B cell (primary cell): ENCODE measurements at regions of chr1 and their contacts with region 1.

Region 1: GRCh38 chr1:93846211-93846991 is 32.6 kb downstream of the DNTTIP2 start:
- DNase-seq: peak; percentile 94
- ATAC-seq: peak; percentile 57
- H3K4me3 ChIP-seq: peak overlapping the region; percentile 45 to 90 (median 86)
- H3K4me3 Mint-ChIP-seq: peak overlapping the region; percentile 95
- H3K27ac ChIP-seq: peak overlapping the region; percentile 91 to 92
- H3K27ac Mint-ChIP-seq: peak overlapping the region; percentile 100
- H3K4me1 ChIP-seq: peaks cover 5 to 30% of the 10 kb centered on the region in 2 donors
- H3K4me1 Mint-ChIP-seq: peaks cover 24% of the 10 kb centered on the region
- H3K27me3 ChIP-seq: no peaks in the 10 kb centered on the region
- H3K27me3 Mint-ChIP-seq: peaks cover 4% of the 10 kb centered on the region
- CTCF ChIP-seq: no peak

Region 2: DNA sequence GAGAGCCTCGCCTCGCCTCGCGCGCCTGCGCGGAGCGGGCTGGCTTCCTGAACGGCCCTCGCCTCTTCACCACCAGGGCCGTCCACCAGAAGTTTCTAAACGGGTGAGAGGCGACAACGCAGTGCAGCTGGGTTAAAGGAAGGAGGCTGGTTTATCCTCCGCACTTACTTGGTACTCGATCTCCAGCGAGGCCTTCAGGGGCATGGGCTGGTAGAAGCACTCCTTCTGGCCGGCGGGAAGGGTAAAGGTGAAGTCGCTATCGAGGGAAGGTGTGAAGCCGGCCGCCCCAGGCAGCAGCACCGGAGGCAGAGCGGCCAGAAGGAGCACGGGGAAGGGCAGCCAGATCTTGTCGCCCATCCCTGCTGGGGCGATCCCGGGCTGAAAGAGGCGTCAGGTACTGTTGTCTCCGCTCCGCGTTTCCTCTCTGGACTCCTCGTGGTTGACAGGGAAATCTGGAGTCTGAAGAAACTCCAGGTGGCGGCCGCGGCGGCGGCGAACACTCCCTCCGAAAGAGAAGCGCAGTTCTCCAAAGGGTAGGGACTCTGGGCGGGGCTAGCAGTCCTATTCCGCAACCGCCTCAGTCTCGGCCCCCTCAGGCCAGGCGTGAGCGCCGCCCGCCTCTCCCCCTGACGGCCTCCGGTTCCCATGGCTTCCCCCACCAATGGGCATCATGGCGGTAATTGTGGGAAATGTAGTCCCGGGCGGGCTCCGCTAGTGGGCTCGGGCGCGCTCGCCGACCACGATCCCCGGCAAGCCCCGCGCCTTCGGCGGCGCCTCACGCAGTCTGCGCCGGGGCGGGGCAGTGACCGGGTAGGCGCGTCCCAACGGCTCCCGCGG is 666.3 kb before region 1 on chr1 and contains the start of gene TMED5:
- CTCF ChIA-PET with region 1: no interaction called
- POLR2A ChIA-PET with region 1: no interaction called
- intact Hi-C with region 1: loop called (anchors 2 kb)
- DNase-seq: peak; percentile 97
- ATAC-seq: peak; percentile 85
- H3K4me3 ChIP-seq: peak within 1 kb of the TSS; percentile 81 to 98 (median 97)
- H3K4me3 Mint-ChIP-seq: peak within 1 kb of the TSS; percentile 90
- H3K27ac ChIP-seq: peak within 1 kb of the TSS; percentile 95 to 96
- H3K27ac Mint-ChIP-seq: peak within 1 kb of the TSS; percentile 93
- H3K4me1 ChIP-seq: peaks cover 27 to 35% of the 10 kb centered on the region in 2 donors
- H3K4me1 Mint-ChIP-seq: peaks cover 34% of the 10 kb centered on the region
- H3K27me3 ChIP-seq: no peaks in the 10 kb centered on the region
- H3K27me3 Mint-ChIP-seq: no peaks in the 10 kb centered on the region
- CTCF ChIP-seq: peak; percentile 24
- total RNA-seq, gene TMED5: 46.1 and 50.7 TPM in 2 replicates

Region 3: GRCh38 chr1:93437976-93438605 is 408.3 kb before region 1 on chr1:
- CTCF ChIA-PET with region 1: interaction called, 6 read pairs
- POLR2A ChIA-PET with region 1: no interaction called
- intact Hi-C with region 1: loop called (anchors 1 kb)
- DNase-seq: peak; percentile 67
- ATAC-seq: peak; percentile 64
- H3K4me3 ChIP-seq: no peak overlapping the region
- H3K4me3 Mint-ChIP-seq: no peak overlapping the region
- H3K27ac ChIP-seq: no peak overlapping the region
- H3K27ac Mint-ChIP-seq: no peak overlapping the region
- H3K4me1 ChIP-seq: no peaks in the 10 kb centered on the region
- H3K4me1 Mint-ChIP-seq: no peaks in the 10 kb centered on the region
- H3K27me3 ChIP-seq: peaks cover 0 to 10% (median 0%) of the 10 kb centered on the region in 4 experiments
- H3K27me3 Mint-ChIP-seq: peaks cover 15% of the 10 kb centered on the region
- CTCF ChIP-seq: peak; percentile 77

Region 4: DNA sequence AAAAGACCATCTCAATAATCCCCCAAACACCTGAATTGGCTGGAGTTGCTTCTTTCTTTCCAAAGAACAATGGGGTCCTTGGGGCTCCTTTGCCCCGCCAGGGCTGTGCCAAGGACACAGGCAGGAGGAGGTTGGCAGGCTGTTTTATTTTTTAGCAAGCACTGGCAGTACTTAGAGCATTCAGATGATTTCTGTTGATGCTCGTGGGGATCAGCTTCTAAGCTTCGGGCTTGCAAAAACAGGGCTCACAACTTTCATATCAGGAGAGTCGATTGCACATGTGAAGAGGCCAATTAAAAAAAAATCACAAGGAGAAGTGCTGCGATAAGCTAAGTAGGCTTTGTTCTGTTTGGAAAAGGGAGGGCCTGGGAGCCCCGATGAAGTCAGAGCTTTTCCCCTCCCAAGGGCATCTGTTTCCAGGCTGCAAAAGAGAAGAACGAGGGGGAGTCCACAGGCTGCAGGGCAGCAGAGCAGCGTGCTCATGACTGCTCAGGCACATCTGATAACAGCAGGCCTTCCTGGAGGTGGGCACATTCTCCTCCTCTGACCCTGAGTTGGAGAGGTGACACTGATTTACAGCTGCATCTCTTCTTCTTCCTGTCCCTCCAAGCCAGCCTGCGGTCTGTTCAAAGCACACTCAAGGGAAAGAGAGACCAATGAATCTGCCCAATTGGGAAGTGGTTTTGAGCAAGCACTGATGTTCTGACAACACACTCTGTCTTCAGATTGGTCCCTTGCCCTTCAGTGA is 137.5 kb before region 1 on chr1:
- CTCF ChIA-PET with region 1: no interaction called
- POLR2A ChIA-PET with region 1: no interaction called
- intact Hi-C with region 1: loop called (anchors 2 kb)
- DNase-seq: no peak
- ATAC-seq: no peak
- H3K4me3 ChIP-seq: no peak overlapping the region
- H3K4me3 Mint-ChIP-seq: peak overlapping the region; percentile 40
- H3K27ac ChIP-seq: peak overlapping the region; percentile 41 to 58
- H3K27ac Mint-ChIP-seq: peak overlapping the region; percentile 42
- H3K4me1 ChIP-seq: peaks cover 49 to 63% of the 10 kb centered on the region in 2 donors
- H3K4me1 Mint-ChIP-seq: peaks cover 54% of the 10 kb centered on the region
- H3K27me3 ChIP-seq: no peaks in the 10 kb centered on the region
- H3K27me3 Mint-ChIP-seq: no peaks in the 10 kb centered on the region
- CTCF ChIP-seq: no peak

Region 5: GRCh38 chr1:93814059-93814794 is 32.2 kb before region 1 on chr1:
- CTCF ChIA-PET with region 1: interaction called, 63 read pairs
- POLR2A ChIA-PET with region 1: interaction called, 4 read pairs
- intact Hi-C with region 1: loop called (anchors 1 kb)
- DNase-seq: peak; percentile 80
- ATAC-seq: peak; percentile 91
- H3K4me3 ChIP-seq: no peak overlapping the region
- H3K4me3 Mint-ChIP-seq: no peak overlapping the region
- H3K27ac ChIP-seq: no peak overlapping the region
- H3K27ac Mint-ChIP-seq: no peak overlapping the region
- H3K4me1 ChIP-seq: peaks cover 14 to 22% of the 10 kb centered on the region in 2 donors
- H3K4me1 Mint-ChIP-seq: peaks cover 17% of the 10 kb centered on the region
- H3K27me3 ChIP-seq: no peaks in the 10 kb centered on the region
- H3K27me3 Mint-ChIP-seq: no peaks in the 10 kb centered on the region
- CTCF ChIP-seq: peak; percentile 97

Region 6: DNA sequence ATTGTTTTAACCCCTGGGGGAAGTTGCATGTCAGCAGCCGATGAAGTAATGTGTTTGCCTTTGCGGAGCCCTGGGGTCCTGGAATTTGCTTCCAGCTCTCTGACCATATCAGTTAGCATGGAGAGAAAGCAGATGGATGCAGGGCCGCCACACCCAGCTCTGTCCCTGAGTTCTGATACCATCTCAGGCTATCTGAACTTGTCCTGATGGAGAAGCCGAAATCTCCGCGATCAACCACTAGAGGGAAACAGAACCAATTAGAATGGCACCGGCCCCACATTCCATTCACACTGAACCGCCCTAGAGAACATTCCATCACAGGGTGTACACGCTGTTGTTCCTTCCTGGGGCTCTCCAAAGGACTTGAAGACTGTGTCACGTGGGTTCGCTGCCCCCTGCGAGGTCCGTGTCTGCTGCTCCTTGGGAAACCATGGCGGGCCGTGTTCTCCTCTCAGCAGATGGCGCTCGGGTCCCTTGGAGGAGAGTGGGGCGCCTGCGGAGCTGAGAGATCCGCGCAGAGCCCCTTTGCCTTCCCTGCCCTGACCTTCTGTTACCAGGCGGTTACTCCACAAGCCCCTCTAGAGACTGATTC is 199.2 kb after region 1 on chr1:
- CTCF ChIA-PET with region 1: no interaction called
- POLR2A ChIA-PET with region 1: no interaction called
- intact Hi-C with region 1: no loop called
- DNase-seq: peak; percentile 30
- ATAC-seq: no peak
- H3K4me3 ChIP-seq: peak overlapping the region in 1 of 5 experiments; percentile 7
- H3K4me3 Mint-ChIP-seq: peak overlapping the region; percentile 37
- H3K27ac ChIP-seq: no peak overlapping the region
- H3K27ac Mint-ChIP-seq: no peak overlapping the region
- H3K4me1 ChIP-seq: no peaks in the 10 kb centered on the region
- H3K4me1 Mint-ChIP-seq: peaks cover 7% of the 10 kb centered on the region
- H3K27me3 ChIP-seq: peaks cover 0 to 23% (median 2%) of the 10 kb centered on the region in 4 experiments
- H3K27me3 Mint-ChIP-seq: peaks cover 20% of the 10 kb centered on the region
- CTCF ChIP-seq: no peak

Region 7: DNA sequence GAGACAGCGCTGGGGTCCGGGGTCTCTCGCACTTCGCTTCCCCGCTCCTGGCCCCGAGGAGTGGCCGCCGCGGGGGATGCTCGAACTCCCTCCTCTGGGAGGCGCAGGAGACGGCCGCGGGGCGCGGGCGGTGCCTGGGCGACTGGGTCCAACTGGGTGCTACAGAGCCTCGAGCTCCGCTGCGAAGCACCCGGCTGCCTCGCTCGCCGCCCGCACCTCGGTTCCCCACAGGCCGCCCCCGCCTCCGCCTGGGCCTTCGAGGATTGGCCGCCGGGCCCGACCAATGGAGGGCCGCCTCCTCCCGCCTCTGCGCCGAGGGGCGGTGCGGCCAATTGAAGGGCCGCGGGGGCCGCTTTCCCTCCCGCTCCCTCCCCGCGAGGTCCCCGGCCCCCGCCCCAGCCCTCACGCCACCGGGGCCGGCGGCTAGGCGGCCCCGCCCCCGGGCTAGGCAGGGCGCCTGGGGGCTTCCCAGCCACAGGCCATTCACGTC is 1080.6 kb after region 1 on chr1 and contains the start of gene CNN3:
- CTCF ChIA-PET with region 1: no interaction called
- POLR2A ChIA-PET with region 1: no interaction called
- intact Hi-C with region 1: loop called (anchors 5 kb)
- DNase-seq: peak; percentile 86
- ATAC-seq: peak; percentile 85
- H3K4me3 ChIP-seq: peak within 1 kb of the TSS; percentile 56 to 67 (median 61)
- H3K4me3 Mint-ChIP-seq: peak within 1 kb of the TSS; percentile 95
- H3K27ac ChIP-seq: peak within 1 kb of the TSS in 1 of 2 donors; percentile 82
- H3K27ac Mint-ChIP-seq: peak within 1 kb of the TSS; percentile 80
- H3K4me1 ChIP-seq: peaks cover 24 to 28% of the 10 kb centered on the region in 2 donors
- H3K4me1 Mint-ChIP-seq: peaks cover 26% of the 10 kb centered on the region
- H3K27me3 ChIP-seq: peaks cover 0 to 30% (median 9%) of the 10 kb centered on the region in 4 experiments
- H3K27me3 Mint-ChIP-seq: peaks cover 27% of the 10 kb centered on the region
- CTCF ChIP-seq: no peak
- total RNA-seq, gene CNN3: 17.2 and 21.1 TPM in 2 replicates